Ascending aorta (tissue), 2 donors: ENCODE measurements at regions of chr3 and their contacts with region 1.

Region 1: GRCh38 chr3:11155341-11156025 is 1.2 kb downstream of the HRH1 start:
- DNase-seq: peak in 1 of 2 donors; percentile 91
- H3K4me3 ChIP-seq: peak overlapping the region; percentile 80 to 87
- H3K27ac ChIP-seq: peak overlapping the region; percentile 94 to 96
- H3K4me1 ChIP-seq: peaks cover 8 to 31% of the 10 kb centered on the region in 2 donors
- H3K27me3 ChIP-seq: no peaks in the 10 kb centered on the region
- CTCF ChIP-seq: peak; percentile 65 to 75 (median 66)

Region 2: DNA sequence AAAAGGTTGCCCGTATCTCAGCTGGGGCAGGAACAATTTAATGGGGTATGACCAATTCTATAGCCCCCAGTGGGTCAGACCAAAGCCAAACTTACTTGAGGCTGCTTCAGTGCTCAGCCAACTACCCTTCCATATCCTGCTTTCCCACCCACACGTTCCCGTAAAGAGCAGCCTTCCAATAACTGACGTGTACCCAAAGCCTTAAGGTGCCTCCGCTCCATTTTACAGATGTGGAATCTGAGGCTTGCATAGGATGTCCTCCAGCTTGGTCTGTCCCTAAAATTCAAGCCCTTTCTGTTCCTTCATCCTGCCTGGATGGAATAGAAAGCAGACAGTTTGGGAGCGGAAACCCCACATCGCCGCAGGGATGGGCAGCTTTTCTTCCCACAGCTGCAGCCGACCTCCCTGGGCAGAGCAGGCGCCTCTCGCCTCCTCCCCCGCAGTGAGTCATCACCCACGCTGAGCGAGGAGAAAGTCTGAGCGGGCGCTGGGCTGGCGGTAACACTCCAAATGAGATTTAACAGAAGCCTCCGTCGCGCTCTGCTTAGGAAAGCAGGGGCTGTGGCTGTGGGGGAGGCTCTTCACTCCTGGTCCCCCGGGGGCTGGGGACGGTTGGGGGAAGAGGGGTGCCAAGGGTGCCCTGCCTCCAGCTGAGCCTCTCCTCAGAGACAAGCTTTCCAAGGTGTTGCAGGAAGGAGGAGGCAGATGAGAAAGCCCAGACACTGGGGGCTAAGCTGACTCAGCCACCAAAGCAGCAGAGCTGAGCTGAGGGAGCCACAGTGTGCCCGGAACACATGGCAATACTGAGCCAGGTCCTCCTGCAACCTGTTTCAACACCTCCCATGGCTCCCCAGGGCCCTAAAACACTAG is 59.0 kb before region 1 on chr3:
- intact Hi-C with region 1: loop called (anchors 5 kb)
- DNase-seq: peak; percentile 54 to 91
- H3K4me3 ChIP-seq: peak overlapping the region; percentile 39 to 51
- H3K27ac ChIP-seq: peak overlapping the region; percentile 82 to 84
- H3K4me1 ChIP-seq: peaks cover 0 to 4% of the 10 kb centered on the region in 2 donors
- H3K27me3 ChIP-seq: no peaks in the 10 kb centered on the region
- CTCF ChIP-seq: no peak

Region 3: DNA sequence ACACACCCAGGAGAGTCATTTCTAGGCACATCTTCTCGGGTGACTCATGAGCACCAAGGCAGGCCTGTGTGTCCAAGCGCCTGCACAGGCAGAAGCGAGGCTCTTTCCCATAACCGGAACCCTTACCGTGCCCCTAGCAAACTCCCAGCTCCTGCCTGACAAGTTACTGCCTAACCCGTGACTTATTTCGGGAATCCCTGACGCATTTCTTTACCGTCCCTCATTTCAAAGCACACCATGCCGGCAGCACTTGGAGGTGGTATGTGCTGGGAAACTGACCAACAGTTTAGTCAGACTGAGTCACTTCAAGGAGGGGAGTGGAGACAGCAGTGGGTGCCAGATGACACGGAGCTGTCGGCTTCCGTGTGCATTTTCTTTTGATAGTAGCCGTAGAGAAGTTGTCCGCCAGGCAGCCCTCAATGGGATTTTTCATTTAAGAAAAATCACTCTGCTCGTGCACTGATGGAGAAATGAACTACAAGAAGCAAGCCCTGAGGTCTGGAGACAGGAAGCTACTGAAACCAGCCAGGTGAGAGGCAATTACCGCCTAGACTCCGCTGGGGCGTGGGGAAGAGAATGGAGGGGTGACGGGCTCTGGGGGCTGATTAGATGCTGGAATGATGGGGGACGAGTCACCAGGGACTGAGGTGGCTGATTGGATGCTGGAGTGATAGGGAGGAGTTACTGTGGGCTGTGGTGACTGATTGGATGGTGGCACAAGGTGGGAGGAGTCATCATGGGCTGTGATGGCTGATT is 18.4 kb before region 1 on chr3:
- intact Hi-C with region 1: loop called (anchors 1 kb)
- DNase-seq: peak; percentile 75 to 96
- H3K4me3 ChIP-seq: peak overlapping the region in 1 of 2 donors; percentile 54
- H3K27ac ChIP-seq: peak overlapping the region; percentile 81 to 93
- H3K4me1 ChIP-seq: peaks cover 4 to 15% of the 10 kb centered on the region in 2 donors
- H3K27me3 ChIP-seq: no peaks in the 10 kb centered on the region
- CTCF ChIP-seq: no peak

Region 4: DNA sequence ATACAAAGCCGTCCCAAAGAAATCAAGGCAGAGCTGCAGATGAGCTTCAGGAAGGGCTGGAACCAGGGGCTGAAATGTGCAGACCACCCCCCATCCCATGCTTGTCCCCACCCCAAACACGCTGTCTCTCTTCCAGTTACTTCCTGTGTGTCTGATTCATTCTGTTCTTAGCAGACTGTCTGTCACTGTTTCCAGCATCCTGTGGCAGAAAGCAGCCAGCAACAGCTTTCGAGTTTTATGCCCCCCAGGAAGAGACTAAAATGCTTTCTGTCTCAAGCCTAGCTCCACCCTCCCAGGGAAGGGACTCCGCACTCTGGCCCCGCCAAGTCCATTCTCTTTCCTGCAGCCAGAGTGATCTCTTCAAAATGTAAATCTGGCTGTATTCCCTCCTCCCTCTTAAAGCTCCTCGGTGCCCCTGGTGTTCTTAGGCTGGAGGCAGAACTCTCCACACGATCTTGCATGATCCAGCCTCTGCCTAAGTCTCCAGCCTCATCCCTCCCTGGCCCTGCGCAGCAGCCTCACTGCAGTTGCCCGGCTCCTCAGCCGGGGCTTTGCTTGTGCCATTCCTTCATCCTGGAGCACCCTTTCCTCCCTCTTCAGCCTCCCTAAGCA is 40.3 kb after region 1 on chr3:
- intact Hi-C with region 1: no loop called
- DNase-seq: peak in 1 of 2 donors; percentile 63
- H3K4me3 ChIP-seq: peak overlapping the region; percentile 1 to 50
- H3K27ac ChIP-seq: peak overlapping the region; percentile 68 to 84
- H3K4me1 ChIP-seq: peaks cover 4 to 36% of the 10 kb centered on the region in 2 donors
- H3K27me3 ChIP-seq: no peaks in the 10 kb centered on the region
- CTCF ChIP-seq: no peak

Region 5: GRCh38 chr3:11211531-11212298 is 56.2 kb after region 1 on chr3:
- intact Hi-C with region 1: loop called (anchors 1 kb)
- DNase-seq: peak in 1 of 2 donors; percentile 71
- H3K4me3 ChIP-seq: peak overlapping the region in 1 of 2 donors; percentile 26
- H3K27ac ChIP-seq: peak overlapping the region; percentile 85 to 86
- H3K4me1 ChIP-seq: peaks cover 9 to 46% of the 10 kb centered on the region in 2 donors
- H3K27me3 ChIP-seq: no peaks in the 10 kb centered on the region
- CTCF ChIP-seq: peak in 1 of 3 experiments; percentile 38

Region 6: DNA sequence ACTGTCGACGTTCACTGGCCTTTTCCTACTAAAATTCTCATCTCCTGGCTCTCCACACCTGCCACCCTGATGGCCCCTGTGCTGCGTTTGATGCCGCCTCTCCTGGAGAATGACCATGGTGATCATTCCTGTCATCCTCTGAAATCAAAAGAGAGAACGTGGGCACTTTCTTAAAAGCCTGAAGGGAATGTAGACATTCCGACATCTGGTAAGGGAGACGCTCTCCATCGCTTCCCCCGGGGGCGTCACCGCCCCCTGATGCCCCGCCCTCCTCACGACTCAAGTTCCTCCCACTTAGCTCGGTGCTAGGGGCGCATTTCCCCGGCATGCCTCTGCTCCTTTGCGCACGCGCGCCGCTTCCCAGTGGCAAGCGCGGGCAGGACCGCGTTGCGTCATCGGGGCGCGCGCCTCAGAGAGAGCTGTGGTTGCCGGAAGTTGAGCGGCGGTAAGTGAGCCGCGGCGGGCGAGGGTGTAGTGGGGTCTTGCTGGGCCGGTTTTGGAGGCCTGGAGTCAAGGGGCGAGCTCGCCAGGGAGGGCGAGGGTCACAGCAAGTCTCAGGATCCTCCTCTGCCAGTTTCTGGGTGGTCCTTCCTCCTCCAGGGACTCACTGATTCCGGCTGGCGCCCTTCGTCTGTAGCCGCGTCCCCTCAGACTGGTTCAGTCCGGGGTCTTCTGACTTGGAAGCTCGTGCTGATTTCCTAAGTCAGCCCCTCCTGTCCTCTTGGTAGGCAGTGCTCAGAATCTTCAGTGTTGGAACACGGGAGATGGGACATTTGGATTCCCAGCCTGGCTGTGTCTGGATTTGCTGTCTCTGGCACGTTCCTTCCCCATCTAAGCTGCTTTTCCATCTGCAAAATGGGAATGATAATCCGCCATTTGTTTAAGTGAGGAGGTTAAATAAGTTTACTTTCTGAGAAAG is 116.8 kb after region 1 on chr3 and contains the start of gene ATG7:
- intact Hi-C with region 1: loop called (anchors 2 kb)
- DNase-seq: peak; percentile 91 to 99
- H3K4me3 ChIP-seq: peak within 1 kb of the TSS; percentile 89 to 91
- H3K27ac ChIP-seq: peak within 1 kb of the TSS; percentile 74 to 85
- H3K4me1 ChIP-seq: peaks cover 8 to 14% of the 10 kb centered on the region in 2 donors
- H3K27me3 ChIP-seq: no peaks in the 10 kb centered on the region
- CTCF ChIP-seq: no peak
- total RNA-seq, gene ATG7: 48.5 TPM

Region 7: GRCh38 chr3:11288786-11289682 is 133.6 kb after region 1 on chr3:
- intact Hi-C with region 1: loop called (anchors 5 kb)
- DNase-seq: no peak
- H3K4me3 ChIP-seq: peak overlapping the region; percentile 17 to 29
- H3K27ac ChIP-seq: peak overlapping the region; percentile 86
- H3K4me1 ChIP-seq: peaks cover 19 to 25% of the 10 kb centered on the region in 2 donors
- H3K27me3 ChIP-seq: no peaks in the 10 kb centered on the region
- CTCF ChIP-seq: no peak

Region 8: GRCh38 chr3:11335056-11335608 is 179.6 kb after region 1 on chr3:
- intact Hi-C with region 1: loop called (anchors 2 kb)
- DNase-seq: no peak
- H3K4me3 ChIP-seq: no peak overlapping the region
- H3K27ac ChIP-seq: no peak overlapping the region
- H3K4me1 ChIP-seq: no peaks in the 10 kb centered on the region
- H3K27me3 ChIP-seq: no peaks in the 10 kb centered on the region
- CTCF ChIP-seq: peak; percentile 64 to 70 (median 67)